Sciatic nerve (tissue), 2 donors: ENCODE measurements at regions of chr3 and their contacts with region 1.

Region 1: DNA sequence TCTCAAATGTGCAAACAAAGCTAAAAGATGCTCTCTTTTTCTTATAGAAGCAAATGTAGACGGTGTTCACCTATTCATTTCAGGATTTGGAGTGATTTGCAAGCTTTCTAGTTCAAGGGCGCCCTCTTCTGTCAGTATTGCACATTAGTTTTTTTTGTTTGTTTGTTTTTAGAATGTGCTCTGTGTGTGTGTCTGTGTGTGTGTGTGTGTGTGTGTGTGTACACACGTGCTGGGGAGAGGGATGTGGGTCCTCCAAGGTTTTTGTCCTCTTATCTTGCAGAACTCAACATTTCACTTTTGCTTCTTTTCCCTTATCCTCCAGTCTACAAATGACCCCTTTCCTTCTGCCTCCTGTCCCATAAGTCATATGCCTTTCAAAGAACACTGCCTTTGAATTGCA is 23.5 kb downstream of the DNAH1 start:
- DNase-seq: no peak
- ATAC-seq: peak; percentile 67

Region 2: GRCh38 chr3:52231502-52232293 is 107.9 kb before region 1 on chr3:
- intact Hi-C with region 1: loop called (anchors 5 kb)
- DNase-seq: peak; percentile 88
- ATAC-seq: peak; percentile 57

Region 3: DNA sequence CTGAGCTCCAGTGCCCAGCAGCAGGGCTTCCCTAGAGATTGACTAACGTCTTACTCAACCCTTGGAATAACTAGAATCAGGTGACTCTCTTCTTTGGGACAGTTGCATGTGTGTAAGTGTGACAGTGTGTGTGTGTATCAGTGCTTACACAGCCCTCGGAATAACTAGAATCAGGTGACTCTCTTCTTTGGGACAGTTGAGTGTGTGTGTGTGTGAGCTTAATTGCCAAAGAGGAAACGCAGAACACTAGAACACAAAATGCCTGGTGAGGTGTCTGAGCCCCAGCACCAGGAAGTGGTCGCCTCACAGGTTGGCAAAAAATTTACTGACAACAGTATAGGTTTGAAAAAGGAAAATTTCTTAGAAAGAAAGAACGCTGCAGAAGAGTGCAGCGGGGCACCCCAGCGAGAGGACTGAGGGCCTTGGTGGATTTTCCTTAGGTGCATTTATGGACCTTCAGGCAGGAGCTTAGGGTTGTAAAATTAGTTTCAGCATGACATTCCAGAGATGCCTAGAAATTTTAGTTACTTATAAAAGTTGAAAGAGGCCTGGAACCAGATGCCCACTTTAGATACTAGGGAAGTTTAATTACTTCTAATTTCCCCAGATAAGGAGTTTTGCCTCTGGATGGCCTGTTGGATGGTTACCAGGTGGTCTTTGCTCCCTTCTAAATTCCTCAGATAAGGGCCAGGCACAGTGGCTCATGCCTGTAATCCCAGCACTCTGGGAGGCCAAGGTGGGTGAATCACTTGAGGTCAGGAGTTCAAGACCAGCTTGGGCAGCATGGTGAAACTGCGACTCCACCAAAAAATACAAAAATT is 57.4 kb before region 1 on chr3:
- intact Hi-C with region 1: no loop called
- DNase-seq: no peak
- ATAC-seq: no peak

Region 4: DNA sequence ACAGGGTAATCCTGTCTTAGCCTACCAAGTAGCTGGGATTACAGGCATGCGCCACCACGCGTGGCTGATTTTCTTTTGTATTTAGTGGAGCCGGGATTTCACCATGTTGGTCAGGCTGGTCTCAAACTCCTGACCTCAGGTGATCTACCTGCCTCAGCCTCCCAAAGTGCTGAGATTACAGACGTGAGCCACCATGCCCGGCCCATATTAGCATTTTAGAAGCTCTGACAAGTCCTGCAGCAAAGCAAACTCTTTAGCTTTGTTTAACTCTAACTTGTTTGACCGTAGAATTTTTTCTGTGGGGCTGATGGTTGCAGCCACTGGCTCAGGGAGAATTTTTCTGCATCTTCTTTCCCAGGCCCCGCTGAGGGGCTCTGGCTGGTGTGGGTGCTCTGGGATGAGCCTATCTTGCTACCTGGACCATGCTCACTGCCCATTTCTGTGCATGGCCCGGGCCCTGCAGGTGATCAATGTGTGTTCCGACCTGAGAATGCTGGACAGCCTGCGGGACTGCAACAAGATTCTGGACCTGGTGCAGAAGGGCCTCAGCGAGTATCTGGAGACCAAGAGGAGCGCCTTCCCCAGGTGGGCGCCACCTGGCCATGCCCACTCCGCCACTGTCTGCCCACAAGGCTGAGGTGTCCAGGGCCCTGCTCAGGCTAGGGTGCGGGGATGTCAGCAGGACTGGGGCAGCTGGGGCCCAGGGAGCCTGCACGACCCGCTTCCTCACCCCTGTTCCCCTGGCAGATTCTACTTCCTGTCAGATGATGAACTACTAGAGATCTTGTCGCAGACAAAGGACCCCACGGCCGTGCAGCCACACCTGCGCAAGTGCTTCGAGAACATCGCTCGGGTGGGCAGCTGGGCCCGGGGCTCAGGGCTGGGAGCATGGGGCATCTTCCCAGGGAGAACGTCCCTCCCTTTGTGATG is 17.8 kb after region 1 on chr3:
- intact Hi-C with region 1: no loop called
- DNase-seq: no peak
- ATAC-seq: no peak